MCF 10A (cell line): ENCODE measurements at regions of chr2 and their contacts with region 1.

Region 1: DNA sequence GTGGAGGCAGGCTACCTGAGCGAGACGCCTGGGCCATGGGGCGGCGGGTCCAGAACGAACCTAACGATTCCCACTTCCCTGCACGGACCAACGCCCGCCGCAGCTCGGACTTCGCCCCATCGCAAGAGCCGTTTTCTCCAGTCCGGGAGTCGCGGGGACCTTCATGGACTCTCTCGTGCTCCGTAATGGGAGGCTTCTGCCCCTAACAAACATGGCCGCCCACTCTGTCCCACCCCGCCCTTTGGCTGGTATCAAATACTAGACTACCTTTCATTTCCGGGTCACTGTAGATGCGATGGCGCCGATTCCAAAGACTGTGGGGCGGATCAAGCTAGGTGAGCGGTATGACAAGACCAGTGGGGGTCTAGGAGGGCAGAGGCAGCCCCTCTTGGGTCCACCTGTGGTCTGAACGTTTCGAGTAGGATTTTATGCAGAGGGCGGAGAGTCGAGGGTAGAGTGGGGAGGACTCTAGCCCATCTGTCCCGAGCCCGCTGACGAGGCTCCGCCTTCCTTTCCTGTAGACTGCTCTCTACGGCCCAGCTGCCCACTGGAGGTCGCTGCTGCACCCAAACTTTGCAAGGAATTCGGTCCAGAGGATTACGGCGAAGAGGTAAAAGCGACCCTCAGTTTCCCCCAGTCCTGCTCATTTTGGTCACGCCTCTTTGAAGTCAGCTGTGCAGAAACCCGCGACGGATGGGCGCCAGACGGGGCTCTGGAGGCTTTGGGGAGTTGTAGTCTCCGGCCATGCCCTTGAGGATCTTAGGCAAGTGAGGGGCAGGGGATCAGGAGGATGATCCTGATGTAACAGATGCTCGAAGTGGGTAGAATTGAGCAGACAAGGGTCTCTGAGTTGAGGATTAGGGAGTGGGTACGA is at the starts of genes CCDC142 and TTC31:
- DNase-seq: peak; percentile 97
- H3K4me3 Mint-ChIP-seq: peak within 1 kb of the TSS; percentile 85
- H3K27ac Mint-ChIP-seq: peak within 1 kb of the TSS; percentile 89
- H3K4me1 Mint-ChIP-seq: peaks cover 20% of the 10 kb centered on the region
- H3K27me3 Mint-ChIP-seq: no peaks in the 10 kb centered on the region
- CTCF ChIP-seq: peak; percentile 81
- total RNA-seq, gene CCDC142: 10.1 and 16.4 TPM in 2 replicates
- total RNA-seq, gene TTC31: 17.6 and 18.1 TPM in 2 replicates

Region 2: DNA sequence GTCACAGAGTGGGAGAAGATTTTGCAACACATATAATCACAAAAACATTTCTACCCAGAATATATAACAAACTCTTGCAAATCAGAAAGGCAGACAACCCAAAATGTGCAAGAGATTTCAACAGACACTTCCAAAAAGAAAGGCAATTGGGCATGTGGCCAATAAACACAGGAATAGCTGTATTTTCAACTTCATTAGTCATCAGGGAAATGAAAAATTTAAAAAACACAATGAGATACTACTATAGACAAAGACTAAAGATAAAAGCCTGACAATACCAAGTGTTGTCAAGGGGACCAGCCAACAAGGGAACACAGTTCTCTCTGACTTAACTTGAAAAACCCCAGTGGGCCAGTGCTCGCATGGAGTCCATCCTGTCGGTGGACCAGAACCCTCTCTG is 244.2 kb before region 1 on chr2:
- CTCF ChIA-PET with region 1: no interaction called
- POLR2A ChIA-PET with region 1: no interaction called
- intact Hi-C with region 1: no loop called
- DNase-seq: peak; percentile 96
- H3K4me3 Mint-ChIP-seq: no peak overlapping the region
- H3K27ac Mint-ChIP-seq: peak overlapping the region; percentile 42
- H3K4me1 Mint-ChIP-seq: peaks cover 24% of the 10 kb centered on the region
- H3K27me3 Mint-ChIP-seq: no peaks in the 10 kb centered on the region
- CTCF ChIP-seq: no peak

Region 3: DNA sequence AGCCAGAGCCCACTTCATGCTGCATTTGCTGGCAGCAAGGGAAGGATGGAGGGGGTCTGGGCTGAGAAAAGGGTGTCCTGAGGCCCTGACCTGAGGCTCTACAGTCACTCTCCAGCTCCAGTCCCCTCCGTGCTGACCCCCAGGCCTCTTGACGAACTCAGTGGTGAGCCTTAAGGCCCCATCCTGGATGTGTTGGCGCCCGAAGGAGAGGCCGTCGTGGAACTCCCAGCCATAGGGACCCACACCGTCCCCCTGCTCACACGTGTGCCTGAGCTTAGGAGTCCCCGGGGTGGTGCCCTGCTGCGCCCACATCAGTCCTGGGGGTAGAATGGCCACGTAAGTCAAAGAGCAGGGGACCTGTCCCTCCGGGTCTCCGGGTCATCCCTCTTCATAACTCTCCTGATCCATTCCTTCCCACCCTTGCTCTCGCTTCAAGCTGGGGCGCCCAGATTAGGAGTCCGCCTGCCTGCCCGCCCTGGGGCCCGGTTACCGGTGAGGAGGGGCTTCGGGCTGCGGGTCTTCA is 18.6 kb before region 1 on chr2:
- CTCF ChIA-PET with region 1: interaction called, 15 read pairs
- POLR2A ChIA-PET with region 1: interaction called, 102 read pairs
- intact Hi-C with region 1: no loop called
- DNase-seq: no peak
- H3K4me3 Mint-ChIP-seq: peak overlapping the region; percentile 95
- H3K27ac Mint-ChIP-seq: peak overlapping the region; percentile 97
- H3K4me1 Mint-ChIP-seq: peaks cover 13% of the 10 kb centered on the region
- H3K27me3 Mint-ChIP-seq: no peaks in the 10 kb centered on the region
- CTCF ChIP-seq: no peak

Region 4: DNA sequence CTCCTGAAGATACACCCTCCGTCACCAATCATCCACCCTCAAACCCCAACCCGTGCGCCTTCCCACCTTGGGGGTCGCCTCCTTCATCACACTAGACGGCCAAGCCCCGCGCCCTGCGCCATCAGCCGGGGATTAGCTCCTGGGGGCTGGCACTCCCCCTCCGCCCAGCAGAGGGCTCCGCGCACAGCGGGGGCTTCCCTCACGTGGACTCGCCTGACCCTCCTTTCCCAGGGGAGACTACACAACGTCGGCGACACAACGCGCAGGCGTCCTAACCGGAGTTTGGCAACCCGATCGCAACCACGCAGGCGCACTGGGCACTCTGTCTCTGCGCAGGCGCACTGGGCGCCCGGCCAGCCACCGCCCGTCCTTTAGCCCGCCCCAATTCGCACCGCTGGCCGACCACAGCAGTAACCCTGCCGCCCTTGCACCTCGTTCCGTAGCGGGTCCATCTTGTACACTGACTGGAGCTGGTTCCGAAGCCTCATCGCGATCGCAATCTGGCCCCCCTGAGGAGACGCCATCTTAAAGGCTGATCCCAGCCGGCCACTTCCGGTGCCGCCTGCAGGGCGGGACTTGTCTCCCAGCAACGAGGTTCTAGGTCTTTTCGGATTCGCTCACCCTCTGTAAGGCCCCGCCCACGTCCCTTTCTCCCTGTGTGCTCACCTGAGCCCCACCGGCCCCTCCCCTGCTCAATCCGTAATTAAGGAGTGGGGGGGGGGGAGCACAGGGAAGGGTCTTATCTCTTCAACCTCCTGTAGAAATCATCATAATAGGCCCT is 24.3 kb after region 1 on chr2 and contains the start of gene PCGF1:
- CTCF ChIA-PET with region 1: interaction called, 18 read pairs
- POLR2A ChIA-PET with region 1: interaction called, 33 read pairs
- intact Hi-C with region 1: no loop called
- DNase-seq: peak; percentile 98
- H3K4me3 Mint-ChIP-seq: peak within 1 kb of the TSS; percentile 88
- H3K27ac Mint-ChIP-seq: peak within 1 kb of the TSS; percentile 98
- H3K4me1 Mint-ChIP-seq: peaks cover 28% of the 10 kb centered on the region
- H3K27me3 Mint-ChIP-seq: no peaks in the 10 kb centered on the region
- CTCF ChIP-seq: no peak
- total RNA-seq, gene PCGF1: 37.5 and 41.6 TPM in 2 replicates

Region 5: DNA sequence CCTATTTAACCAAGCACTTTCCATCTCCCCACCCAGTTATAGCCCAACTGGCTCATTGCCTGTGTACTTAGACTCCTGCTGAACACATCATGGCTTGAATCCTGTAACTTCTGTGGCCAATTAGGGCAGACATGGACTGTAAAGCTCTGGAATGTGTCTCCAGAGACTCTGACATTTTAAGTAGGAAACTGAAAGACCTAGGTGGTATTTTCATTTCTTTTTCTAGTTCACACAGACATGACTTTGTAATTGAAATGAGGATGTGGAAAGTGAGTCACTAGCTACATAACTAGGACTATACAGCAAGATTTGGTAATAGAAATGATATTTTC is 83.7 kb after region 1 on chr2:
- CTCF ChIA-PET with region 1: interaction called, 6 read pairs
- POLR2A ChIA-PET with region 1: interaction called, 11 read pairs
- intact Hi-C with region 1: no loop called
- DNase-seq: peak; percentile 54
- H3K4me3 Mint-ChIP-seq: no peak overlapping the region
- H3K27ac Mint-ChIP-seq: peak overlapping the region; percentile 89
- H3K4me1 Mint-ChIP-seq: peaks cover 48% of the 10 kb centered on the region
- H3K27me3 Mint-ChIP-seq: no peaks in the 10 kb centered on the region
- CTCF ChIP-seq: no peak

Region 6: DNA sequence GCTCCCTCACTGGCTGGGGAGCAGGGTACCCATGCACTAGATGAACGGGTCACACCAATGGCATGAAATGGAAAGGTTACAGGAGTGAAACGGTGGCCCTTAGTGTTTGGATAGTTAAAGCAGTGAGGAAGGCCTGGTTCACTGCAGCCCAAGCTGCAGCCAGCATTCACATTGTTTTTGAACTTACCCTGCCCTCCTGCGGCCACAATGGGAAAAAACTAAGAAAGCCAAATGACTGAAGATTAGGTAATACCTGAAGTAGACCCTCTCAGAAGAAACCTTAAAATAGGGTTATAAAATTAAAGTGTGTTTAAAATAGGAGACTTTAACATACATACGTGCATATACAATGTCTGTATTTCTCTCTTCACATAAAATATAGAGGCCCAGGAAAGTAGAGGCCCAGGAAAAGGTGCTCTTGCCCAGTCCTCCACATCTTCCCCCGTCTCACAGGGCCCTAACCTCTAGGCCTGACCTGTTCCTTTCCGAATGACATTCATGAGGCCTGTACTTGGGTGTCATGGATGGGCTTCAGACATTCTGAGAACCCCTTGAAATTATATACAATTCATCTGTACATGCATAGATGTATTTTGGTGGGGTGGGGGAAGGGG is 104.7 kb after region 1 on chr2:
- CTCF ChIA-PET with region 1: interaction called, 179 read pairs
- POLR2A ChIA-PET with region 1: interaction called, 46 read pairs
- intact Hi-C with region 1: loop called (anchors 1 kb)
- DNase-seq: peak; percentile 78
- H3K4me3 Mint-ChIP-seq: no peak overlapping the region
- H3K27ac Mint-ChIP-seq: no peak overlapping the region
- H3K4me1 Mint-ChIP-seq: peaks cover 8% of the 10 kb centered on the region
- H3K27me3 Mint-ChIP-seq: peaks cover 4% of the 10 kb centered on the region
- CTCF ChIP-seq: peak; percentile 71